Colonic mucosa (tissue), 4 donors: ENCODE measurements at regions of chr4 and their contacts with region 1.

Region 1: GRCh38 chr4:48963042-48963679 is 22.9 kb upstream of the CWH43 start:
- DNase-seq: peak; percentile 80
- H3K4me3 ChIP-seq: no peak overlapping the region
- H3K27ac ChIP-seq: no peak overlapping the region
- H3K4me1 ChIP-seq: no peaks in the 10 kb centered on the region
- H3K27me3 ChIP-seq: no peaks in the 10 kb centered on the region
- CTCF ChIP-seq: peak; percentile 97

Region 2: DNA sequence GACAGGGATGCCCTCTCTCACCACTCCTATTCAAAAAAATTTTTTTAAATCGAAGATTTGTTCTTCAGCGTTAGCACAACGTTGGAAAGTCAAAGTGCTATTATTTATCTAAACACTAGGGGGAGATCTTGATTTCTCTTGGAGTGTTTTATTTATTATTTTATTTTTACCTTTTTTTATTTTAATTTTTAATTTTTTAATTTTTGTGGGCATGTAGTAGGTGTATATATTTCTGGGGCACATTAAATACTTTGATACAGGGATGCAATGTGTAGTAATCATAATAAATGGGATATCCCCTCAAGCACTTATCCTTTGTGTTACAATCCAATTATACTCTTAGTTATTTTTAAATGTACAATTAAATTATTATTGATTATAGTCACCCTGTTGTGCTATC is 517.5 kb before region 1 on chr4:
- intact Hi-C with region 1: loop called (anchors 10 kb)
- DNase-seq: no peak
- H3K4me3 ChIP-seq: no peak overlapping the region
- H3K27ac ChIP-seq: no peak overlapping the region
- H3K4me1 ChIP-seq: no peaks in the 10 kb centered on the region
- H3K27me3 ChIP-seq: no peaks in the 10 kb centered on the region
- CTCF ChIP-seq: peak; percentile 48

Region 3: GRCh38 chr4:48578132-48578968 is 384.8 kb before region 1 on chr4:
- intact Hi-C with region 1: loop called (anchors 5 kb)
- DNase-seq: peak; percentile 72
- H3K4me3 ChIP-seq: no peak overlapping the region
- H3K27ac ChIP-seq: no peak overlapping the region
- H3K4me1 ChIP-seq: no peaks in the 10 kb centered on the region
- H3K27me3 ChIP-seq: no peaks in the 10 kb centered on the region
- CTCF ChIP-seq: peak; percentile 90

Region 4: DNA sequence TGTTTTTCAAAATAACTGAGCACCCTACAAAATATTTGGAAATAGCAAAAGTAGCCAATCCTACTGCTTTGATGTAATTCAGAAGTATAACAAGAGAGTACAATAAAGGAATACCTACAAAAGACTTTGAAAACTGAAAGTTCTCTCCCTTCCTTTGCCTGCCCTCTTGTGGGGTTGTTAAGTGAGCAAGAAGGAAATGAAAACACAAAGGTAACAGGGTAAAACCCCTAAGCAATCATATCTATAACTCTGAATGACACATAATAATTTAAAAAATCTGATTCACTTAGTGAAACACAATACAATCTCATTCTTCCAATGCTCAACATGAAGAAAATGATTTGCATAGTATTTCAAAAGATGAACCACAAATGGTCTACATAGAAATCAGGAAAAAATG is 281.3 kb before region 1 on chr4:
- intact Hi-C with region 1: loop called (anchors 5 kb)
- DNase-seq: no peak
- H3K4me3 ChIP-seq: no peak overlapping the region
- H3K27ac ChIP-seq: peak overlapping the region; percentile 65
- H3K4me1 ChIP-seq: no peaks in the 10 kb centered on the region
- H3K27me3 ChIP-seq: no peaks in the 10 kb centered on the region
- CTCF ChIP-seq: peak; percentile 44